ENCODE measurements at regions of chr17 and their contacts with region 1.

Region 1: DNA sequence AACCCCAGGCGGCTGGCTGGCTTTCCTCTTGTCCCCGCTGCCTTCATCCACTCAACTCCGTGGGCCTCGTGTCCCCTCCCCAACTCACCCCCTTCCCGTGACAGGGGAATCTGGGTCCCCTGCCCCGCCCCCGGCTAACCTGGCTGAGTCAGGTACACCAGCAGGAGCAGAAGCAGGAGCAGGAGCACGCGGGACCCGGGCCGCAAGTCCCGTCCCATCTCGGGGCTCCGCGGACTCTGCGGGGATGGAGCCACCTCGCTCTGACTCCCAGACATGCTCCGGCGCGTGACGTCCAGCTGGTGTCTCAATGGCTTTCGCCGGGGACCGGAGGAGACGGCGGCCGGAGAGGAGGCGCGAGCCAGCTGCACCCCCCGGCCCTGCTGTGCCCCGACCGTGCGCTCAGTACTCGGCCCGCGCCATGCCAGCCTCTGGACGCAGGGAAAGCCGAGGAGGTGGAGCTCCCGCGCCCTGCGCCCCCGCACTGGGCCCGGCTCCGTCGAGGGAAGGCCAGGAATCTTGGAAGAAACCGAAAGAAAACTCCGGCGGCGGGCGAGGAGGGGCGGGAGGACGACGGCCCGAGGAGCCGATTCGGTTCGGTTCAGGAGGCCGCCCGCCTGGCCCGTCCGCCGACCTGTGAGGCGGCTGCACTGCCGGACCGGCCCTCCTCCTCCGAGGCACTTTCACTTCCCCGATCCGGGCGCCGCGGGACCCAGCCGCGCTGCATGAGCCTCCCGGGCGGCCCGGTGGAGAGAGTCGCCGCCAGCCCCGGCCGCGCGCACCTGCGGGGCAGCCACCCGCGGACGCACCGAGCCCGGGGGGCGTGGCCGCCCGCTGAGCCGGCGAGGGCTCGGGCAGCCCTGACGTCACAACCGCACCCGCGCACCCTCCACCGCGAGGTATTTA is at the starts of genes CXCL16 and ZMYND15:
- DNase-seq: peak; percentile 59 to 63
- H3K4me3 ChIP-seq: peak within 1 kb of the TSS; percentile 87 to 91 (median 89)
- H3K27ac ChIP-seq: peak within 1 kb of the TSS; percentile 88 to 89
- H3K4me1 ChIP-seq: no peaks in the 10 kb centered on the region
- H3K27me3 ChIP-seq: no peaks in the 10 kb centered on the region
- CTCF ChIP-seq: no peak
- POLR2A ChIP-seq: no peak
- total RNA-seq, gene CXCL16: 13.8 to 25.8 (median 18.6) TPM
- total RNA-seq, gene ZMYND15: 0.96 to 2.3 (median 0.98) TPM

Region 2: GRCh38 chr17:4678427-4679026 is 60.8 kb before region 1 on chr17:
- intact Hi-C with region 1: no loop called
- DNase-seq: no peak
- H3K4me3 ChIP-seq: no peak overlapping the region
- H3K27ac ChIP-seq: no peak overlapping the region
- H3K4me1 ChIP-seq: no peaks in the 10 kb centered on the region
- H3K27me3 ChIP-seq: no peaks in the 10 kb centered on the region
- CTCF ChIP-seq: no peak
- POLR2A ChIP-seq: no peak

Region 3: DNA sequence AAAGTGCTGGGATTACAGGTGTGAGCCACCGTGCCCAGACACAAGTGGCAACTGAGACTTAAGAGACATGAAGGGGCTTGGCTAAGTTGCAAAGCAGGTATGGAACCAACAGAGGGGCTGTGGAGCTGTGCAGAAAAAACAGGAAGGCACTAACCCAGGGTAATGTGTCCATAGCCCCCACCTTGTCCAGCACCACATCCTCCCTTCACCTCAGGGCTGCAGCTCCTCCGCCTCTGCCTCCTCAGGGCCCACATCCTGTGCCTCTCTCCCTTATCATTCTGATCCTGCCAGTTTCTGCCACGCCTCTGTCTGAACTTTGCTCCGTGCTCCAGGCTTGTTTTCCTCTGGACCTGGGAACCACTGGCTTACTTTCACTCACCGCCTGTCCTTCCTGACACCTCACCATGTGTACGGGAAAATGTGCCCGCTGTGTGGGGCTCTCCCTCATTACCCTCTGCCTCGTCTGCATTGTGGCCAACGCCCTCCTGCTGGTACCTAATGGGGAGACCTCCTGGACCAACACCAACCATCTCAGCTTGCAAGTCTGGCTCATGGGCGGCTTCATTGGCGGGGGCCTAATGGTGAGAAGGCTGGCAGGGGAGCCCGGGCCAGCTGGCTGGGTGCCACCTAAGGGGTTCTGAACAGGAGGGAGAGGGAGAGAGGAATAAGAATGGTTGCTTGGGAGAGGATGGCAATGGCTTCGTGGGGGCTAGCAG is 32.3 kb after region 1 on chr17 and contains the start of gene TM4SF5:
- intact Hi-C with region 1: no loop called
- DNase-seq: no peak
- H3K4me3 ChIP-seq: no peak within 1 kb of the TSS
- H3K27ac ChIP-seq: no peak within 1 kb of the TSS
- H3K4me1 ChIP-seq: no peaks in the 10 kb centered on the region
- H3K27me3 ChIP-seq: no peaks in the 10 kb centered on the region
- CTCF ChIP-seq: no peak
- POLR2A ChIP-seq: no peak
- total RNA-seq, gene TM4SF5: not detected

Region 4: GRCh38 chr17:4881761-4882555 is 142.6 kb after region 1 on chr17:
- intact Hi-C with region 1: loop called (anchors 10 kb)
- DNase-seq: peak; percentile 60 to 72
- H3K4me3 ChIP-seq: no peak overlapping the region
- H3K27ac ChIP-seq: no peak overlapping the region
- H3K4me1 ChIP-seq: no peaks in the 10 kb centered on the region
- H3K27me3 ChIP-seq: no peaks in the 10 kb centered on the region
- CTCF ChIP-seq: peak; percentile 63 to 81 (median 74)
- POLR2A ChIP-seq: no peak